ENCODE measurements at regions of chr14 and their contacts with region 1.

Region 1: GRCh38 chr14:103699901-103700752 is 15.1 kb downstream of the XRCC3 start:
- DNase-seq: no peak
- H3K4me3 ChIP-seq: no peak overlapping the region
- CTCF ChIP-seq: no peak
- POLR2A ChIP-seq: no peak

Region 2: GRCh38 chr14:103576371-103577024 is 123.6 kb before region 1 on chr14:
- intact Hi-C with region 1: loop called (anchors 10 kb)
- DNase-seq: peak; percentile 91 to 97
- H3K4me3 ChIP-seq: no peak overlapping the region
- CTCF ChIP-seq: no peak
- POLR2A ChIP-seq: no peak

Region 3: DNA sequence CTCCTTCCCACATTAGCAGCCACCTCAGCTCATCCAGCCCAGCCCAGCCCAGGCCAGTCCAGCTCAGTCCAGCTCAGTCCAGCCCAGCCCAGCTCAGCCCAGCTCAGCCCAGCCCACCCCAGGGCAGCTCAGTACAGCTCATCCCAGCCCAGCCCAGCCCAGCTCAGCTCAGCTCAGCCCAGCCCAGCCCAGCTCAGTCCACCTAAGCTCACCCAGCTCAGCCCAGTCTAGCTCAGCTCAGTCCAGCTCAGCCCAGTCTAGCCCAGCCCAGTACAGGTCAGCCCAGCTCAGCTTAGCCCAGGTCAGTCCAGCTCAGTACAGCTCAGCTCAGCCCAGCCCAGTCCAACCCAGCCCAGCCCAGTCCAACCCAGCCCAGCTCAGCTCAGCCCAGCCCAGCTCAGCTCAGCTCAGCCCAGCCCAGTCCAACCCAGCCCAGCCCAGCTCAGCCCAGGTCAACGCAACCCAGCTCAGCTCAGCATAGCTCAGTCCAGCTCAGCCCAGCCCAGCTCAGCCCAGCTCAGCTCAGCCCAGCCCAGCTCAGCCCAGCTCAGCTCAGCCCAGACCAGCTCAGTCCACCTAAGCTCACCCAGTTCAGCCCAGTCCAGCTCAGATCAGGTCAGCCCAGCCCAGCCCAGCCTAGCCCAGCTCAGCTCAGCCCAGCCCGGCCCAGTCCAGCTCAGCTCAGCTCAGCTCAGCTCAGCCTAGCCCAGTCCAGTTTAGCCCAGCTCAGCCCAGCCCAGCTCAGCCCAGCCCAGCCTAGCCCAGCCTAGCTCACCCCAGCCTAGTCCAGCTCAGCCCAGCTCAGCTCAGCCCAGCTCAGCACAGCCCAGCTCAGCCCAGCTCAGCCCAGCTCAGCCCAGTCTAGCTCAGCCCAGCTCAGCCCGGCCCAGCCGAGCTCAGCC is 1889.3 kb after region 1 on chr14:
- intact Hi-C with region 1: no loop called
- DNase-seq: no peak
- H3K4me3 ChIP-seq: no peak overlapping the region
- CTCF ChIP-seq: no peak
- POLR2A ChIP-seq: no peak

Measured in lower leg skin (tissue), 4 donors.